ENCODE measurements at regions of chr11 and their contacts with region 1.

Region 1: GRCh38 chr11:91248199-91248807 is 976.3 kb upstream of the FAT3 start:
- DNase-seq: peak; percentile 71
- H3K4me3 Mint-ChIP-seq: no peak overlapping the region
- H3K27ac Mint-ChIP-seq: no peak overlapping the region
- H3K4me1 Mint-ChIP-seq: peaks cover 6% of the 10 kb centered on the region
- H3K27me3 Mint-ChIP-seq: no peaks in the 10 kb centered on the region
- CTCF ChIP-seq: peak; percentile 47

Region 2: GRCh38 chr11:90476442-90477007 is 771.8 kb before region 1 on chr11:
- CTCF ChIA-PET with region 1: interaction called, 3 read pairs
- POLR2A ChIA-PET with region 1: no interaction called
- intact Hi-C with region 1: loop called (anchors 5 kb)
- DNase-seq: peak; percentile 71
- H3K4me3 Mint-ChIP-seq: no peak overlapping the region
- H3K27ac Mint-ChIP-seq: peak overlapping the region; percentile 16
- H3K4me1 Mint-ChIP-seq: peaks cover 7% of the 10 kb centered on the region
- H3K27me3 Mint-ChIP-seq: no peaks in the 10 kb centered on the region
- CTCF ChIP-seq: peak; percentile 58

Region 3: GRCh38 chr11:90930252-90930651 is 318.1 kb before region 1 on chr11:
- CTCF ChIA-PET with region 1: no interaction called
- POLR2A ChIA-PET with region 1: no interaction called
- intact Hi-C with region 1: no loop called
- DNase-seq: no peak
- H3K4me3 Mint-ChIP-seq: no peak overlapping the region
- H3K27ac Mint-ChIP-seq: no peak overlapping the region
- H3K4me1 Mint-ChIP-seq: no peaks in the 10 kb centered on the region
- H3K27me3 Mint-ChIP-seq: no peaks in the 10 kb centered on the region
- CTCF ChIP-seq: no peak

Region 4: GRCh38 chr11:91041626-91042025 is 206.7 kb before region 1 on chr11:
- CTCF ChIA-PET with region 1: interaction called, 12 read pairs
- POLR2A ChIA-PET with region 1: no interaction called
- intact Hi-C with region 1: loop called (anchors 1 kb)
- DNase-seq: peak; percentile 7
- H3K4me3 Mint-ChIP-seq: no peak overlapping the region
- H3K27ac Mint-ChIP-seq: no peak overlapping the region
- H3K4me1 Mint-ChIP-seq: no peaks in the 10 kb centered on the region
- H3K27me3 Mint-ChIP-seq: no peaks in the 10 kb centered on the region
- CTCF ChIP-seq: peak; percentile 16